K562 (cell line): ENCODE measurements at regions of chr10 and their contacts with region 1.

Region 1: DNA sequence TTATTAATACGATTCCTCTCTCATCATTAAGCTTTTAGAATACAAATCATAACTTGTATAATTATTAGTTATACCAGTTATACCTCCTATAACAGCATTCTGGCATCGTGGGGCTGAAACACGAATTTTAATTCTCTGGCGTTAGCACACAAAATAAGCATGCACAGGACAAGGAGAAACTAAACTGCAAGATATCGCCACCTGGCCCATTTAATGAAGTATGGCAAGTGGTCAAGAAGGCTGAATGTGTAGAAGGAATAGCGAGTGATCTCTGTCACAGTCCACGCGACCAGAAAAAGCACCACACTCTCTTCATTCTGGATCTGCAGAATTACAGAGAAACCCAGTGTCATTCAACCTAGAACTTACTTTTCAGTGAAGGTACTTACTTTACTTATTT is 18.1 kb downstream of the HACD1 start:
- DNase-seq: peak; percentile 19 to 69 (median 39)
- ATAC-seq: peak; percentile 97
- H3K4me3 ChIP-seq: no peak overlapping the region
- H3K27ac ChIP-seq: no peak overlapping the region
- H3K4me1 ChIP-seq: peaks cover 2 to 6% of the 10 kb centered on the region in 2 experiments; a peak in 2 of 5 replicates
- H3K27me3 ChIP-seq: no peaks in the 10 kb centered on the region
- CTCF ChIP-seq: peak; percentile 49 to 63 (median 61)
- EP300 ChIP-seq: no peak
- POLR2A ChIP-seq: no peak
- RAD21 ChIP-seq: peak; percentile 77 to 88

Region 2: GRCh38 chr10:17409170-17409733 is 189.8 kb before region 1 on chr10:
- CTCF ChIA-PET with region 1: no interaction called
- POLR2A ChIA-PET with region 1: no interaction called
- in situ Hi-C with region 1: no loop called
- intact Hi-C with region 1: loop called (anchors 1 kb)
- DNase-seq: peak in 2 of 4 experiments; percentile 34 to 62
- ATAC-seq: peak; percentile 67
- H3K4me3 ChIP-seq: no peak overlapping the region
- H3K27ac ChIP-seq: no peak overlapping the region
- H3K4me1 ChIP-seq: peaks cover 14 to 29% of the 10 kb centered on the region in 2 experiments; a peak in 4 of 5 replicates
- H3K27me3 ChIP-seq: no peaks in the 10 kb centered on the region
- CTCF ChIP-seq: peak; percentile 47 to 67 (median 50); a peak in 5 of 6 replicates
- EP300 ChIP-seq: no peak
- POLR2A ChIP-seq: no peak
- RAD21 ChIP-seq: peak; percentile 63 to 79

Region 3: GRCh38 chr10:17430647-17431355 is 168.3 kb before region 1 on chr10:
- CTCF ChIA-PET with region 1: no interaction called
- POLR2A ChIA-PET with region 1: interaction called, 4 read pairs
- in situ Hi-C with region 1: no loop called
- intact Hi-C with region 1: loop called (anchors 5 kb)
- DNase-seq: peak; percentile 51 to 89 (median 58)
- ATAC-seq: peak; percentile 48
- H3K4me3 ChIP-seq: no peak overlapping the region
- H3K27ac ChIP-seq: peak overlapping the region; percentile 27
- H3K4me1 ChIP-seq: peaks cover 43 to 77% of the 10 kb centered on the region in 2 experiments
- H3K27me3 ChIP-seq: no peaks in the 10 kb centered on the region
- CTCF ChIP-seq: peak; percentile 79 to 92 (median 88)
- EP300 ChIP-seq: no peak
- POLR2A ChIP-seq: no peak
- RAD21 ChIP-seq: peak; percentile 87 to 91

Region 4: DNA sequence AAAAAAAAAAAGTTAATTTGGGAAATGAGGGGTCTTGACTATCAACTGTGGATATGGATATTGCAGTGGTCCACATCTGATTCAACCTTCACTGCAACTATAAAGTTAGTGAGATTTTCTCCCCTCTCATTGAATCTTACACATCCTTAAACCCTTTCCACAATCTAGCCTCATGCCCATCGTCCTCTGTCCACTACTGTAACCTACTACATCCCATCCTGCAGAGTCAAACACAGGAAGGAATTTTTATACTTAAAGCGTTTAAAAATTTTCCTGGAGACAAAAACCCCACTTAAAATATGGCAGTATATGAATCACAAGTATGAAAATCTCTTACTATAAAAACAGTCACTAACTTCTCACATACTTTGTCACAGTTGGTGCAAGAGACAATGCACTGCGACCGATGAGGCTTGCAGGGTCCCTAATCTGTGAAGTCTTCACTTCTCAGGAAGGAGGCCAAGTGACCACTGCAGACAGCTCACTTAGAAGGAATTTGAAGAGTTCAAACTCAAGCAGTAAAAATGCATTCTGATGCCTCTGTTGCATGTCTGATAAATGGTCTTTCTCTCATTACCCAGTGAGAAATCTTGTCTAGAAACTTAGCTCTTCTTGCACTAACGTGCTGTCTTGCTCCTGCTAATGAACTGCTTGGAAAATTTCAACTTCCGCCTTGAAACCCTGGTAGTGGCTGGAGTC is 94.4 kb before region 1 on chr10:
- CTCF ChIA-PET with region 1: no interaction called
- POLR2A ChIA-PET with region 1: no interaction called
- in situ Hi-C with region 1: no loop called
- intact Hi-C with region 1: loop called (anchors 5 kb)
- DNase-seq: peak in 1 of 4 experiments; percentile 17
- ATAC-seq: peak; percentile 12
- H3K4me3 ChIP-seq: no peak overlapping the region
- H3K27ac ChIP-seq: peak overlapping the region; percentile 78; the same call in 2 of the 3 replicates
- H3K4me1 ChIP-seq: peaks cover 10 to 47% of the 10 kb centered on the region in 2 experiments
- H3K27me3 ChIP-seq: no peaks in the 10 kb centered on the region
- CTCF ChIP-seq: no peak
- EP300 ChIP-seq: no peak
- POLR2A ChIP-seq: no peak
- RAD21 ChIP-seq: no peak